ENCODE measurements at regions of chr9 and their contacts with region 1.

Region 1: GRCh38 chr9:134449221-134449894 is 123.1 kb downstream of the RXRA start:
- DNase-seq: peak; percentile 74
- H3K4me3 ChIP-seq: no peak overlapping the region
- CTCF ChIP-seq: peak; percentile 98

Region 2: DNA sequence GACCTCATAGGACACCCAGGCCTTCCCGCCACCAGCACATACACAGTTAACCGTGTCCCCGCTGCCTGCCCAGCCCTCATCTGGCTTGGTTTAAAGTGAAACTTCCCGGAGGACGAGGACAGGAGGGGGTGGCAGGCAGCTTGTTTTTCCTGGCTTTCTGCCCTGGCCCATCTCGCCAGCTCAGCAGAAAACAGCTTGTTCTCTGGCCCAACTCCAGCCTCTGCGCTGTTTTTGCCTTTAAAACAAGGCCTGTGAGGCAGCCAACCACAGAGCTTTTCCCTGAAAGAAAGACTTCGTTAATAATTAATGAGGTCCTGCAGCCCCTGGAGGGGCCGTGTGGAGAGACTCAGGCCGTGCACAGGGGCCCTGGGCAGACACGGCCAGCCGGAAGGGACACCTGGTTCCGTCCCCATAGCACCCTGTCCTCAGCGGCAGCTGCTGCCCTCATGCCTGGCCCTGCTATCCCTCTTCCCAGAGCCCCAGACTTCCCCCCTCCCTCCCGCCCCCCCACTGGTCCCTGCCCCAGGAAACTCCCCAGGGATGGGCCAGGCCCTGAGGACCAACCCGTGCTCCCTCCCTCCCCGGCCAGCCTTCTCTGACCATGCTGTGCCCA is 14.4 kb before region 1 on chr9:
- CTCF ChIA-PET with region 1: interaction called, 12 read pairs
- POLR2A ChIA-PET with region 1: no interaction called
- DNase-seq: peak; percentile 80
- H3K4me3 ChIP-seq: no peak overlapping the region
- CTCF ChIP-seq: no peak

Region 3: DNA sequence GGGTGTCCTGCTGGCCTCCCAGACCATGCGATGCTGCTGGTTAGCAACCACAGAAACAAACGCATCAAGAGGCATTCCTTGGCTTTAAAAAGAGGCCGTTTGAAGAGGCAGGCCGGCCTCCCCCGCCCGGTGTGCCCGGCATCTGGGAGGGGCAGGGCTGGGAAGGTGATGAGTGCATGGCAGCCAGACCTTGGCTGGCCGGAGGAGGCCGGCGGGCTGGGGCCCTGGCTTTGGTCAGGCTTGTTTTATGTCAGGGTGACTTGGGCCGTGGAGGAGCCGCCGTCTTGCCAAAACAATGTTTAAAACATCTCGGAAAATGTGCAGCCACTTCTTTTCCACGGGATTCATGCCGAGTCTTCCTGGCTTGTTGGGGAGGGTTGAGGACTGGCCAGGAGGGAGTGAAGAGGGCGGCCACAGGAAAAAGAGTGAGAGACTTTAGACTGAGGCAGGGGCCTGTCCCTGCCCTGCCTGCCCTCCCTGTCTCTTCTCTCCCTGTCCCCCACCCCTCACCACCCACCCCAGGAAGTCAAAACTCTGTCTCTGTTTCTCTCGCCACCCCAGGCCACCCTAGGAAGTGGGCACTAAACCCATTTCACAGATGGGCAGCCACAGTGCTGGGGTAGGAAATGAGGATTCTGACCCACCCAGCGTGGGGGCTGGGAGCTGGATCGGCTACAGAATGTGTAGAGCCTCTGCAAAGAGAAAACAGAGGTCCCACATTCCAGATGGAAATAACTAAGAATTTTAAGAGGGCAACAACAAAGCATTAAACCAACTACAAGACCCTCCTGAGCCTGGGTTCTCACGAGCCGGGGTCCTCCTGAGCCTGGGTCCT is 19.9 kb after region 1 on chr9:
- CTCF ChIA-PET with region 1: no interaction called
- POLR2A ChIA-PET with region 1: no interaction called
- DNase-seq: no peak
- H3K4me3 ChIP-seq: no peak overlapping the region
- CTCF ChIP-seq: no peak

Region 4: DNA sequence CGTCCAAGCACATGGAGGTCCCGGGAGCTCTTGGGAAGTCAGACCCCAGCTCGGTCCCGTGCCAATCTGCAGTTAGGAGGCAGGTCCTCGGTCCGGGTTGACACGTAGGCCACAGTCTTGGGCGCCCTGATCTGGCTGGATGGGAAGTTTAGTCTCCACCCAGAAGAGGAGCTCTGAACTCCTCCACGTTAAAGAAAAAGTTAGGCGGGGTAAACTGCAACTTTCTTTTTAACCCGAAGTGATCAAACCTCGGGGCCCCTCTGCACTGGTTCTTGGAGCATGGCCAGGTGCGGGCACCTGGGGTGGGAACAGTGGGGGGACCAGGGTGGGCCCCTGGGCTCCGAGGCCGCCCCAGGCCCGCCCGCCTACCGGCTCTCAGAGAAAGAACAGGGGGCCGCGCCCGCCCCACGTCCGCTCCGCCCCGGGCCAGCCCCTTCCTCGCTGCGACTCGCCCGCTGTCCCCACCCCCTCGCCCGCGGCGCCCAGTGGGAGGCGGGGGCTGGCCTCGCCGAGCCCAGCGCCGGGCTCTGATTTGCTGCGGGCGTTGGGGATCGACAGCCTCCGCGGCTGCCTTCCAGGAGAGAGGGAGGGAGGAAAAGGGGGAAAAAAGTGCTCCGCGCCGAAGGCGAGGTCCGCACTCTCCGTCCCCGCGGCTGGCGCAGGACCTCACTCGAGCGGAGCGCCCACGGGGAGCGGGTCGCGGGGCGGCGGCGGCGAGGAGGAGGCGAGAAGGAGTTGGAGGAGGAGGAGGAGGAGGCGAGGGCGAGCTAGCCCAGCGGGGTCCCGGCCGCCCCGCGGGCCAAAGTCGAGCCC is 192.0 kb after region 1 on chr9 and contains the start of gene COL5A1:
- CTCF ChIA-PET with region 1: interaction called, 44 read pairs
- POLR2A ChIA-PET with region 1: interaction called, 10 read pairs
- DNase-seq: no peak
- H3K4me3 ChIP-seq: peak within 1 kb of the TSS; percentile 97
- CTCF ChIP-seq: peak; percentile 29

Region 5: DNA sequence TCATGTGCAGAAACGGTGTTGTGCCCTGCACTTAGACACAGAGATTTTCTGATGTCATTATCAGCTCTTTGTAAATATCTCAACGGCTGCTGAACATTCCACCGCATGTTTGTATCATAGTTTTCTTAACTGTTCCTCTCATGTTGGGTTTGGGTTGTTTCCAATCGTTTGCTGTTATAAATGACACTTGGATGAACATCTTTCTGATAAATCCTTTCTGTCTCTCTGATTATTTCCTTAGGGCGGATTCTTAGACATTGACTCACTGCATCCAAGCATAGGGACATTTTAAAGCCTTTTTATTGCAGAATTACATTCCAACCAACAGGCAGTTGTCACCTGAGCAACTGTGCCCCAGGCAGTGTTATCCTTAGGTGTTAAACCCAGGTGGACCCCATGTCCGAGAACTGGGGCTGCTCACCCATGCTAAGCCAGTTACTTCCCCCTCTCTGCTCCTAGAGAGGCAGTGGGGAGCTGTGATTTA is 220.7 kb after region 1 on chr9:
- CTCF ChIA-PET with region 1: interaction called, 34 read pairs
- POLR2A ChIA-PET with region 1: no interaction called
- DNase-seq: peak; percentile 76
- H3K4me3 ChIP-seq: no peak overlapping the region
- CTCF ChIP-seq: no peak

Region 6: DNA sequence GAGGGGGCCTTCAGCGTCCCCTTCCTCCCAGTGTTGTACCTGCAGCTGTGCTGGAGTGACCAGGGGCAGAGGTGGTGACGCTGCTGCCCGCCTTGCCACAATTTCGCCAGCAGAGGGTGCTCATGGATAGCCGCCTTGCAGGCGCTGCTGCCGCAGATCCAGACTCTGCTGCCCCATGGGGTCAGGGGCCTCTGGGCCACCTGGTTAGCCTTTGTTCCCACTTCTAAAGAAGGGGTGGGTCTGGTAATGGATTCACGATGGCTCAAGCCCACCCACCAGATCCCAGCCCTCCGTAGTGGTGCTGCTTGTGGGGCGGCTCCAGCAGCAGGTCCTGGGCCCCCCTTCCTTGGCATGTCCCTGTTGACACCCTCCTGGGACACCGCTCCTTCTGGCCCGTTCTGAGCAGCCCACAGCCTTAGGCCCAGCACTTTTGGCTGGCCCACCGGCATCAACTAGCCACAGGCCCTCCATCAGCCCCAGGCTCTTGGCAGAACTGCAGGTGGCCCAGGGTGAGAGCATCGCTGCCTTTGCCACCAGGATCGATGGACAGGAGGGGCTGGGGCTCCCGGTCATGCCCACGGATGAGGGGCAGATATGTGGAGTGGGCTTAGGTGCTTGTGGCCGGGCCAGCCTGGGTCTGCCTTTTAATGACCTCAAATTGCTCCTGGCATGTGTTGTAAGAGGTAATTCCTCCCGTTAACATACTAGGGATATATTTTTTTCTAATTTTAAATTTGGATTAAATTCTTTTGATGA is 249.4 kb after region 1 on chr9:
- CTCF ChIA-PET with region 1: interaction called, 12 read pairs
- POLR2A ChIA-PET with region 1: no interaction called
- DNase-seq: no peak
- H3K4me3 ChIP-seq: no peak overlapping the region
- CTCF ChIP-seq: peak; percentile 87

Region 7: DNA sequence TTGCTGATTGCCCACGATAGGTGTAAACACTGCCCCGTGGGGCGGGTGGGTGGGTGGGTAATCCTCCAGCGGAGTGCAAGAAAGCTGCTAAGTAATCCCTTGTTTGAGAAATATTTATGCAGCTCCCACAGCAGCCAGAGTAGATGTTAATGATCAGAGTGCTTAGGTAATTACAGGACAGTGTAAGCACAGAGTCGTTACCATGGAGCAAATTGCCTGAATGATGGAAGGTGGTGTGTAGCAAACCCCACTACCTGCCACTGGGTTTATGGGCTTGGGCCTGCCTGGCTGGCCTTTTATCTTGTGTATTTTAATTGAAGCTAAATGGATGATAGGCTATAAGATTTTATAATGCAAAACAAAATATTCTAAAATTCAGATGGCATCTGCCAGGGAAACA is 302.3 kb after region 1 on chr9:
- CTCF ChIA-PET with region 1: interaction called, 14 read pairs
- POLR2A ChIA-PET with region 1: no interaction called
- DNase-seq: no peak
- H3K4me3 ChIP-seq: no peak overlapping the region
- CTCF ChIP-seq: no peak

Measured in AG04449 (cell line).